B cell (primary cell): ENCODE measurements at regions of chr12 and their contacts with region 1.

Region 1: GRCh38 chr12:46303039-46303666 is 34.3 kb upstream of the SLC38A1 start:
- DNase-seq: peak; percentile 73
- ATAC-seq: peak; percentile 71
- H3K4me3 ChIP-seq: no peak overlapping the region
- H3K4me3 Mint-ChIP-seq: no peak overlapping the region
- H3K27ac ChIP-seq: no peak overlapping the region
- H3K27ac Mint-ChIP-seq: peak overlapping the region; percentile 28
- H3K4me1 ChIP-seq: peaks cover 19 to 20% of the 10 kb centered on the region in 2 donors
- H3K4me1 Mint-ChIP-seq: peaks cover 29% of the 10 kb centered on the region
- H3K27me3 ChIP-seq: no peaks in the 10 kb centered on the region
- H3K27me3 Mint-ChIP-seq: no peaks in the 10 kb centered on the region
- CTCF ChIP-seq: peak; percentile 72

Region 2: DNA sequence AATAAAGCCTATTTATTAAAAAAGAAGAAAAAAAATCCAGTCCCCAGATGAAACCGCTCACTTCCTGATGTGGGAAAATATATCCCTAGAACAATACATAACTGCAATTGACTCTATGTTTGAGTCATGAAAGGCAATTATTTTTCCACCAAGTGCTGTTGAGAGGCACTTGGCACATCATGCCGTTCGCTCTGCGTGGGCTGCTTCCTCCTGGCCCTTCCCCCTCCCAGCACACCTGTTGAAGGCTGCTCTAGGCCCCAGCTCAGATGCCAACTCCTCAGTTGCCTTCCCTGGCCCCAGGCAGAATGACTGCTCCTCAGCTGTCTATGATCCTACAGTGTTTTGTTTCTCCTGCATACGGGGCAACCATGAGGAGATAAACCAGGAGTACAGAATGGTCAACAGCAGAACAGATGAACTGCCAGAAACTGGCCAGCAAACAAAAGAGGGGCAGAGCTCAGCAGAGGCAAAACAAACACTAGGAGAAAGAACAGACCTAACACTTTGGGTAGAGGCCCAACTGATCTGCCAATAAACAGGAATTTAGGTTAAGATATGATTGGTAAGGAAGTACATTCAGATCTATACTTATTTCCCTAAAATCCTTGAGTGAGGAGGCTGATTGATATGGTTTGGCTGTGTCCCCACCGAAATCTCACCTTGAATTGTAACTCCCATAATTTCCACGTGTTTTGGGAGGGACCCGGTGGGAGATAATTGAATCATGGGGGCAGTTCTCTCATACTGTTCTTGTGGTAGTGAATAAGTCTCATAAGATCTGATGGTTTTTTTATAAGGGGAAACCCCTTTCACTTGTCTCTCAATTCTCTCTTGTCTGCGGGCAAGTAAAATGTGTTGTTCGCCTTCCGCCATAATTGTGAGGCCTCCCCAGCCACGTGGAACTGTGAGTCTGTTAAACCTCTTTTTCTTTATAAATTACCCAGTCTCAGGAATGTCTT is 93.0 kb before region 1 on chr12:
- CTCF ChIA-PET with region 1: interaction called, 6 read pairs
- POLR2A ChIA-PET with region 1: interaction called, 4 read pairs
- intact Hi-C with region 1: loop called (anchors 1 kb)
- DNase-seq: peak; percentile 77
- ATAC-seq: peak; percentile 72
- H3K4me3 ChIP-seq: peak overlapping the region in 1 of 5 experiments; percentile 9
- H3K4me3 Mint-ChIP-seq: peak overlapping the region; percentile 68
- H3K27ac ChIP-seq: peak overlapping the region; percentile 84 to 96
- H3K27ac Mint-ChIP-seq: peak overlapping the region; percentile 92
- H3K4me1 ChIP-seq: peaks cover 74 to 88% of the 10 kb centered on the region in 2 donors
- H3K4me1 Mint-ChIP-seq: peaks cover 89% of the 10 kb centered on the region
- H3K27me3 ChIP-seq: no peaks in the 10 kb centered on the region
- H3K27me3 Mint-ChIP-seq: no peaks in the 10 kb centered on the region
- CTCF ChIP-seq: no peak